Heart right ventricle (tissue), 16 donors: ENCODE measurements at regions of chr1 and their contacts with region 1.

Region 1: GRCh38 chr1:55284852-55285251 is 69.7 kb upstream of the USP24 start:
- DNase-seq: peak in 1 of 2 donors; percentile 62
- ATAC-seq: peak; percentile 55 to 77 (median 70)
- H3K4me3 ChIP-seq: no peak overlapping the region
- H3K27ac ChIP-seq: no peak overlapping the region
- H3K4me1 ChIP-seq: peaks cover 0 to 6% (median 0%) of the 10 kb centered on the region in 9 donors
- H3K27me3 ChIP-seq: no peaks in the 10 kb centered on the region
- CTCF ChIP-seq: peak; percentile 20 to 82 (median 72)

Region 2: GRCh38 chr1:55215256-55216021 is 69.4 kb before region 1 on chr1 and contains the start of gene USP24:
- intact Hi-C with region 1: no loop called
- DNase-seq: peak; percentile 77 to 84
- ATAC-seq: peak; percentile 92 to 96 (median 93)
- H3K4me3 ChIP-seq: peak within 1 kb of the TSS; percentile 70 to 96 (median 88)
- H3K27ac ChIP-seq: peak within 1 kb of the TSS; percentile 92 to 99 (median 98)
- H3K4me1 ChIP-seq: peaks cover 2 to 65% (median 58%) of the 10 kb centered on the region in 9 donors
- H3K27me3 ChIP-seq: no peaks in the 10 kb centered on the region
- CTCF ChIP-seq: no peak
- total RNA-seq, gene USP24: 31.4 to 49.7 (median 42.5) TPM

Region 3: DNA sequence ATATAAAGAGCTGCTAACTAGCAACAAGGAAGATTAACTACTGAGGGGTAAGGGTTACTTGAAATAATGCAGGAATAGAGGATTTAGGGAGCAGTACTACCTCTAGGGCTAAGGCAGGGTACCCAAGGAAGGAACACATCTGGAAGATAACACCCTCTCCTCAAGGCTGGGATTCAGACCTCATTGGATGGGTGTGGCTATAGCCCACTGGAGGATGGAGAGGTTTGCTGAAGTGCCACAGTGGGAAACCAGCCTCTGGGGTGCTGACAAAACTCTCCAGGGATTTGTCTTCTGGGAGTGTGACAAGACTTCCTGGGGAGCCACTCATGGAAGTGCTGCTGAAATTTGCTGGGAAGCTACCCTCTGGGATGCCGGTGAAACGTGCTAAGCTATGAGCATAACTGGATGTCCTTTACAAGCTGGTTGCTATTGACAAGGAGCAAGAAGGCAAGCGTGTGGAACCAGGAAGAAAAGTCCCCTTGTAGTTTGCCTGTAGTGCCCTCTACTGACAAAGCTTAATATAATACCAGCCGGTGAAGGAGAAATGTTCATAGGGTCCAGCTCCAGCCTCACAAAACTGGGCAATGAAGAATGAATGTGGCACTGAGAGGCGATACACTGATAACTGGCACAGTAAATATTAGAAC is 53.1 kb after region 1 on chr1:
- intact Hi-C with region 1: loop called in 9 of 10 experiments (anchors 1 to 5 kb)
- DNase-seq: no peak
- ATAC-seq: peak in 7 of 8 donors; percentile 33 to 65 (median 46)
- H3K4me3 ChIP-seq: no peak overlapping the region
- H3K27ac ChIP-seq: no peak overlapping the region
- H3K4me1 ChIP-seq: peaks cover 0 to 16% (median 0%) of the 10 kb centered on the region in 9 donors
- H3K27me3 ChIP-seq: no peaks in the 10 kb centered on the region
- CTCF ChIP-seq: peak in 8 of 9 donors; percentile 9 to 59 (median 48)

Region 4: DNA sequence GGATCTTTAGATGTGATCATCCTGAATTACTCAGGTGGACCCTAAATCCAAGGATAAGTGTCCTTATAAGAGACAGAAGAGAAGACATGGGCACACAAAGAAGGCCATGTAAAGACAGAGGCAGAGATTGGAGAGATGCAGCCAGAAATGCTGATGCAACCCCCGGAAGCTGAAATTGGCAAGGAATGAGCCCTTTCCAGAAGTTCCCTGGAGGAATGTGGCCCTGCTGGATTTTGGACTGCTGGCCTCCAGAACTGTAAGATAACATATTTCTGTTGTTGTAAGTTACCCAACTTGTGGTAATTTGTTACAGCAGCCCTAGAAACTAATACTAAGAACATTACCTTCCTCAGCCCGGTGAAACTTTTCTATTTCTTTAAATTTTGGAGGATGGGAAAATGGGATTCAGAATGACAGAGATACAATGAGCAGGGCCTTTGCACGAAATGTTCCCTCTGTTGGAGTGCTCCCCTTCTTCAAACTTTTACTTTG is 1305.7 kb after region 1 on chr1:
- intact Hi-C with region 1: loop called in 8 of 10 experiments (anchors 1 to 5 kb)
- DNase-seq: no peak
- ATAC-seq: no peak
- H3K4me3 ChIP-seq: no peak overlapping the region
- H3K27ac ChIP-seq: no peak overlapping the region
- H3K4me1 ChIP-seq: no peaks in the 10 kb centered on the region
- H3K27me3 ChIP-seq: no peaks in the 10 kb centered on the region
- CTCF ChIP-seq: no peak

Region 5: DNA sequence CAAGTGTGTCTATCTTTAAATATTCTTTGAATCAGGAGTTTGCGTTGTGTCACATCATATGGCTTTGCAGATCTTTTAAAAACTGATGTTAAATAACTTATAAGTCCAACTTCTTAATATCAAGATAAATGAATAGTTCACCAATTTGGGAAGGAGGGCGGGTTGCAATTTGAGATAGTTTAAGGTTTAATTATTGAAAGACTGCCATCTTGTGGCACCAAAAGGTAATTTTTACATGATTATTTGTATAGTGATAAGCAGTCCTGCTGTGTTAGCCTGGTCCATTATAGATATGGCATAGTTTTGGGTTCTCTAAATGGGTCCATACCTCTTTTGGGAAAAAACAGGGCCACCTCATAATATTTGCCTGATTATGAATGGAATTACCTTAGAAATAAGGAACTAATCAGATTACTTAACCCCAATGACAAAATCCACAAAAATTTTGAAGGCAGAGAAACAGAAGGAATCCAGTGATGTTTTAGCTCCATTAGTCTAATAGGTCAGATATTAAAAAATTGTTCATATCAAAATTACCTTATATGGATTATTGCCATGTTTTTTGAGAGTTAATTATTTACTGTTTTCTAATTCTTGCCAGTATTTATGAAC is 1424.5 kb after region 1 on chr1:
- intact Hi-C with region 1: loop called in 9 of 10 experiments (anchors 2 to 10 kb)
- DNase-seq: no peak
- ATAC-seq: peak; percentile 38 to 78 (median 58)
- H3K4me3 ChIP-seq: no peak overlapping the region
- H3K27ac ChIP-seq: peak overlapping the region in 1 of 10 donors; percentile 2
- H3K4me1 ChIP-seq: peaks cover 0 to 36% (median 4%) of the 10 kb centered on the region in 9 donors
- H3K27me3 ChIP-seq: no peaks in the 10 kb centered on the region
- CTCF ChIP-seq: peak; percentile 28 to 73 (median 60)